B cell (primary cell): ENCODE measurements at regions of chr11 and their contacts with region 1.

Region 1: DNA sequence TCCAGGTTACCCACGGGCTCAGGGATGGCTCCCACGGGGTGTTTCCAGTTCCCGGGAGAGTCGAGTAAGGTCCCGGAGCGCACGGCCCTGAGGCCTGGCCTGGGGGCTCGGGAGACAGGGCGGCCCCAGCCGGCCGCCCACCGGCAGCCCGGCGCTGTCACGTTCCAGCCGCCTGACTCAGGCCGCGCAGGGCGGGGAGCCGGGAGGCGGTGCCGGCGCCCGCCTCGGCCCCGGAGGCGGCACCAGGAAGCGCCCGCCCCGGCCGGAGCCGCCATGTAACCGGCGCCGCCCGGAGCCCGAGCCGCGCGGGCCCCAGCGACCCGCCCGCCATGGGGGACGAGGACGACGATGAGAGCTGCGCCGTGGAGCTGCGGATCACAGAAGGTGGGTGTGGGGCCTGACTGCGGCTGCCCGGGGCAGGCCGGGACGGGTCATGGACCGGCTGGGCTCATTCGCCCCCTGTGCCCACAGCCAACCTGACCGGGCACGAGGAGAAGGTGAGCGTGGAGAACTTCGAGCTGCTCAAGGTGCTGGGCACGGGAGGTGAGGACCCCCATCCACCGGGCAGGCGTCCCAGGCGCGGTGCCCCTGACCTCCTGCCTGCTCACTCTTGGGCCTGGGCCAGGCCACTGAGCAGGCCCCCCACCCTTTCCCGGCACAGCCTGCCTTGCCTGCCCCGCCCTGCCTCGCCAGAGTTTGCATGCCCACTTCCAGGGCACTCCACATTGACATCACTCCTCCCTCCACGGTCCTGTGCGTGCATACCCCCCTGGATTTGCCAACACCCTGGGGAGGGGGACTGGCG is at the start of gene RPS6KA4:
- DNase-seq: peak; percentile 68
- ATAC-seq: peak; percentile 72
- H3K4me3 ChIP-seq: peak within 1 kb of the TSS; percentile 26 to 86 (median 75)
- H3K4me3 Mint-ChIP-seq: peak within 1 kb of the TSS; percentile 94
- H3K27ac ChIP-seq: peak within 1 kb of the TSS; percentile 12 to 46
- H3K27ac Mint-ChIP-seq: peak within 1 kb of the TSS; percentile 81
- H3K4me1 ChIP-seq: peaks cover 27 to 51% of the 10 kb centered on the region in 2 donors
- H3K4me1 Mint-ChIP-seq: peaks cover 43% of the 10 kb centered on the region
- H3K27me3 ChIP-seq: no peaks in the 10 kb centered on the region
- H3K27me3 Mint-ChIP-seq: no peaks in the 10 kb centered on the region
- CTCF ChIP-seq: no peak
- total RNA-seq, gene RPS6KA4: 22.6 and 24.2 TPM in 2 replicates

Region 2: GRCh38 chr11:64324692-64325469 is 34.2 kb before region 1 on chr11:
- CTCF ChIA-PET with region 1: interaction called, 188 read pairs
- POLR2A ChIA-PET with region 1: no interaction called
- intact Hi-C with region 1: no loop called
- DNase-seq: no peak
- ATAC-seq: no peak
- H3K4me3 ChIP-seq: no peak overlapping the region
- H3K4me3 Mint-ChIP-seq: no peak overlapping the region
- H3K27ac ChIP-seq: no peak overlapping the region
- H3K27ac Mint-ChIP-seq: no peak overlapping the region
- H3K4me1 ChIP-seq: no peaks in the 10 kb centered on the region
- H3K4me1 Mint-ChIP-seq: peaks cover 6% of the 10 kb centered on the region
- H3K27me3 ChIP-seq: no peaks in the 10 kb centered on the region
- H3K27me3 Mint-ChIP-seq: no peaks in the 10 kb centered on the region
- CTCF ChIP-seq: no peak

Region 3: GRCh38 chr11:64331557-64332371 is 27.3 kb before region 1 on chr11:
- CTCF ChIA-PET with region 1: interaction called, 24 read pairs
- POLR2A ChIA-PET with region 1: interaction called, 6 read pairs
- intact Hi-C with region 1: loop called (anchors 1 kb)
- DNase-seq: peak; percentile 69
- ATAC-seq: peak; percentile 23
- H3K4me3 ChIP-seq: no peak overlapping the region
- H3K4me3 Mint-ChIP-seq: peak overlapping the region; percentile 27
- H3K27ac ChIP-seq: no peak overlapping the region
- H3K27ac Mint-ChIP-seq: peak overlapping the region; percentile 57
- H3K4me1 ChIP-seq: peaks cover 20 to 32% of the 10 kb centered on the region in 2 donors
- H3K4me1 Mint-ChIP-seq: peaks cover 34% of the 10 kb centered on the region
- H3K27me3 ChIP-seq: no peaks in the 10 kb centered on the region
- H3K27me3 Mint-ChIP-seq: no peaks in the 10 kb centered on the region
- CTCF ChIP-seq: peak; percentile 66

Region 4: DNA sequence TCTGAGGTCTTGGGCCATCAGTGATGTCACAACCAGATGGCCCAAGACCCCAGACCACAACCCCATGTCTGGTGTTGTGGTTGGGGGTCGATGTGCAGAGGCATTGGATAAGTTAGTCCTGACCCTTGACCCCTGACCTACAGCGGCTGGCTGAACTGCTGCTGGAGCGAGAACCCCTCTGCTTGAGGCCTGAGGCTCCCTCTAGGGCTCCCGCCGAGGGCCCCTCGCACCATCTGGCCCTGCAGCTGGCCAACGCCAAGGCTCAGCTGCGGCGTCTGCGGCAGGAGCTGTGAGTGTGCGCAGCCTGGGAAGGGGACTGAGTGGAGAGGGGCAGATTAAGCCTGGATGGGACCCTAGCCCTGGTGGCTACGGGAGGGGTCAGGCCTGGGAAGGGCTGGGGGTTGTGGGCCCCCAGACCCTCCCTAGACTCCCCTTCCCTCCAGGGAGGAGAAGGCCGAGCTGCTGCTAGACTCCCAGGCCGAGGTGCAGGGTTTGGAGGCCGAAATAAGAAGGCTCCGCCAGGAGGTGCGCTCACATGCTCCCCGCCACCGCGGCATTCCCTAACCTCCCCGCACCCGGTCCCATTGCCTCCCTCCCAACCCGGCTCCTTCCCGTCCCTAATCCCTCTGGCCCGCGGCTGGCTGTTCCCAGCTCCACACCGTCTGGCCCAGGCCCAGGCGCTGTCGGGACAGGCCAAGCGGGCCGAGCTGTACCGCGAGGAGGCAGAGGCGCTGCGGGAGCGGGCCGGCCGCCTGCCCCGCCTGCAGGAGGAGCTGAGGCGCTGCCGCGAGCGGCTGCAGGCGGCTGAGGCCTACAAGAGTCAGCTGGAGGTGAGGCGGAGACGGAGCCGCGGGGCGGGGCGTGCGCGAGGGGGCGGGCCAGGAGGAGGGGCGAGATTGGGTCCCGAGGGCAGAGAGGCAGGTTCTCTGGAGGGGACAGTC is 17.0 kb before region 1 on chr11:
- CTCF ChIA-PET with region 1: interaction called, 45 read pairs
- POLR2A ChIA-PET with region 1: interaction called, 3 read pairs
- intact Hi-C with region 1: loop called (anchors 1 kb)
- DNase-seq: peak; percentile 88
- ATAC-seq: peak; percentile 46
- H3K4me3 ChIP-seq: peak overlapping the region in 2 of 5 experiments; percentile 15 to 19
- H3K4me3 Mint-ChIP-seq: peak overlapping the region; percentile 89
- H3K27ac ChIP-seq: peak overlapping the region in 1 of 2 donors; percentile 12
- H3K27ac Mint-ChIP-seq: no peak overlapping the region
- H3K4me1 ChIP-seq: peaks cover 30 to 39% of the 10 kb centered on the region in 2 donors
- H3K4me1 Mint-ChIP-seq: peaks cover 50% of the 10 kb centered on the region
- H3K27me3 ChIP-seq: no peaks in the 10 kb centered on the region
- H3K27me3 Mint-ChIP-seq: no peaks in the 10 kb centered on the region
- CTCF ChIP-seq: peak; percentile 43